ENCODE measurements at regions of chr1 and their contacts with region 1.

Region 1: DNA sequence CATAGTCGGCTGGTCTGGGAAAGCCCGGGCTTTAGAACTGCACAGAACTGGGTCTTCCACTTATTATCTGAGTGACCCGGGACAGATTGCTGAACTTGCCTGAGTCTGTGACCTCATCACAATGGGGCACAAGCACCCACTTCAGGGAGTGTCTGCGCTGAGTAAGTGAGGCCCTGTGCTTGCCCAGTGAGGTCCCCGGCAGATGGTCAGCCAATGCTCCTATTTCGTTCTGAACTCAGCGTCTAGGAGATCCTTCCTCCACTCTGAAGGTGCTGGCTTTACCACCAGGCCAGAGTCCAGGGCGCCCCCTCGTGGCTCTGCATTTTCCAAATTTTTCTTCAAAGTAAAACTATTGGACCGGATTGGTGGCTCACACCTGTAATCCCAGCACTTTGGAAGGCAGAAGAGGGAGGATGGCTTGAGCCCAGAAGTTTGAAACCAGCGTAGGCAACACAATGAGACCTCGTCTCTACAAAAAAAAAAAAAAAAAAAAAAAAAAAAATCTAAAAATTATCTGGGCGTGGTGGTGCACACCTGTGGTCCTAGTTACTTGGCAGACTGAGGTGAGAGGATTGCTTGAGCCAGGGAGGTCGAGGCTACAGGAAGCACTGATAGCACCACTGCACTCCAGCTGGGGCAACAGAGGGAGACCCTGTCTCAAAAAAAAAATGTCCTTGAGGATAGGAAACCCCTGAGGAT is 61.7 kb downstream of the FCRL5 start:
- DNase-seq: peak; percentile 43 to 46
- ATAC-seq: peak in 4 of 8 donors; percentile 24 to 67 (median 32)
- H3K4me3 ChIP-seq: no peak overlapping the region
- H3K27ac ChIP-seq: no peak overlapping the region
- H3K4me1 ChIP-seq: no peaks in the 10 kb centered on the region
- H3K27me3 ChIP-seq: peaks cover 0 to 33% (median 19%) of the 10 kb centered on the region in 7 donors
- CTCF ChIP-seq: peak in 8 of 9 donors; percentile 15 to 59 (median 55)

Region 2: DNA sequence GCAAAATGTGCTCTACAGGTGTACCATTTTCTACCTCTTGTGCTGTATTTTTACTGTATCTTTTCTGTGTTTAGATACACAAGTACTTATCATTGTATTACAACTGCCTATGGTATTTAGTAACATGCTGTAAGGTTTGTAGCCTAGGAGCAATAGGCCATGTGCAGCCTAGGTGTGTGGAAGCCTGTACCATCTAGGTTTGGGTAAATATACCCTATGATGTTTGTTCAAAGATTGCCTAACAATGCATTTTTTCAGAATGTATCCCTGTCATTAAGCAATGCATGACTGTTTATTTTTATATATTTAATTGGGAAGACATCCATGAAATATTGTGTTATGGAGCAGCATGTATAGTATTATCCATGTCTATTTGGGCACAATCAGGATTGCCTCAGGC is 402.0 kb before region 1 on chr1:
- intact Hi-C with region 1: no loop called
- DNase-seq: no peak
- ATAC-seq: no peak
- H3K4me3 ChIP-seq: no peak overlapping the region
- H3K27ac ChIP-seq: no peak overlapping the region
- H3K4me1 ChIP-seq: peaks cover 0 to 19% (median 7%) of the 10 kb centered on the region in 9 donors
- H3K27me3 ChIP-seq: no peaks in the 10 kb centered on the region
- CTCF ChIP-seq: no peak

Region 3: GRCh38 chr1:157099630-157100009 is 391.0 kb before region 1 on chr1 and contains the start of gene ETV3L:
- intact Hi-C with region 1: loop called in 1 of 10 experiments (anchors 5 kb)
- DNase-seq: peak in 1 of 2 donors; percentile 28
- ATAC-seq: peak in 4 of 8 donors; percentile 18 to 44 (median 24)
- H3K4me3 ChIP-seq: no peak within 1 kb of the TSS
- H3K27ac ChIP-seq: no peak within 1 kb of the TSS
- H3K4me1 ChIP-seq: no peaks in the 10 kb centered on the region
- H3K27me3 ChIP-seq: peaks cover 0 to 18% (median 0%) of the 10 kb centered on the region in 7 donors
- CTCF ChIP-seq: no peak
- total RNA-seq, gene ETV3L: not detected

Region 4: DNA sequence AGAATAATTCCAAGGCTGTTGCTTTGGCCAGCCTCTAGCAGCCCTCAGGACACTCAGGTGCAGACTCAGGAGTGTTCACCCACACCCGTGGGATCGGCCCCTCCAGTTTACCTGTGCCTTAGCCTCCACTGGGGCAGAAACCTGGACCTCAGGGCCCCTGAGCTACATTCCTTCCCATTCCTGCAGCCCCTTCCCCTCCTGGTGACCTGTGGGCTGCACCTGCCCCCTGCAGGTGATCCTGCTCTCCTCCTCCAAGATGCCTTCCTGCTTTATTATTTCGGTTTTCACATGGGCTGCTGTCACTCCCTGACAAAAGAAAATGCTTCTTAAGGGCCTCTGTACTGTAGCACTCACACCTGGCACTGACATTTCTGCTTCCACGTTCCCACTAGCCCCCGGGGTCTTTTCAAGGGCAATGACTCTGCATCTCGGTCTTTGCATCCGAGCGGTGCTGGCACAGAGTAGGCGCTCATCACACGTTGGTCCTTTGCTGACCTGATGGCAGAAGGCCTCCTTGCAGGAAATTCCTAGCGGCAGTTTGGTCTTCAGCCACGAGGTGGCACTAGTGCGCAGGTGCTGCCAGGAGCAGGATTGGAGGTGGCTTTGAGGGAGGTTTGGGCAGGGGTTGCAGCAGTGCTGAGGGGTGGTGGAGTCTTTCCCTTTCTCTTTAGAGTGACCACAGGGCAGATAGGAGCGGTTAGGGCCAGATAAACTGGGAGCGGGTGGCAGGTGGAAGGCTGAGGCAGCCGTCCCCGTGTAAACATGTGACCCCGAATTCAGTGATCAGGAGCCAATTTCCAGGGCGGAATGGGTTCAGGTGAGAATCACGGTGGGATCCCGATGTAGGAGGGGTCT is 327.1 kb before region 1 on chr1:
- intact Hi-C with region 1: loop called in 2 of 10 experiments (anchors 5 to 10 kb)
- DNase-seq: peak; percentile 32 to 66
- ATAC-seq: peak in 7 of 8 donors; percentile 37 to 65 (median 49)
- H3K4me3 ChIP-seq: no peak overlapping the region
- H3K27ac ChIP-seq: no peak overlapping the region
- H3K4me1 ChIP-seq: peaks cover 0 to 5% (median 0%) of the 10 kb centered on the region in 9 donors
- H3K27me3 ChIP-seq: peaks cover 0 to 29% (median 12%) of the 10 kb centered on the region in 7 donors
- CTCF ChIP-seq: peak; percentile 69 to 95 (median 87)

Region 5: DNA sequence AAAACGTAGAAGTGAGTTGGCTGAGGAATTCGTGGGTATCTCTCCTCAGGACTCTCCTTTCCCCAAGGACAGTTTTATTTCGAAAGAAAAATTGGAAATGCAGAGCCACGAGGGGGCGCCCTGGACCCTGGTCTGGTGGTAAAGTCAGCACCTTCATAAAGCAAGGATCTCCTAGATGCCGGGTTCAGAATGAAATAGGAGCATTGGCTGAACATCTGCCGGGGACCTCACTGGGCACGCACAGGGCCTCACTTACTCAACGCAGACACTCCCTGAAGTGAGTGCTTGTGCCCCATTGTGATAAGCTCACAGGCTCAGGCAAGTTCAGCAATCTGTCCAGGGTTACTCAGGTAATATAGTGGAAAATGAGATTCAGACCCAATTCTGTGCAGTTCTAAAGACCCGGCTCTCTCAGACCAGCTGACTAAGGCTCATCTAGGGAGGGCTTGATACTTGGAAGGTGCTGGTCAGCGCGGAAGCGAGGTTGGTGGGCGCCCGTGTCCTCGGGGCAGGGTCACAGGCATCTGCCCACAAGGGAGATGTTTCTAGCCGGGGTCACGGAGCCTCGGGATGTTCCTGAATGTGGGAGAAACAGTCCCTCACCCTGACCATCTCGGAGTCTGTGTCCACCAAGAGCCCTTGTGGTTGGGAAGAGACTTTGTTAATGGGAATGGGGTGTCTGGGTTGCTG is 296.8 kb before region 1 on chr1:
- intact Hi-C with region 1: loop called in 8 of 10 experiments (anchors 2 to 5 kb)
- DNase-seq: peak; percentile 17 to 48
- ATAC-seq: no peak
- H3K4me3 ChIP-seq: no peak overlapping the region
- H3K27ac ChIP-seq: no peak overlapping the region
- H3K4me1 ChIP-seq: peaks cover 0 to 6% (median 0%) of the 10 kb centered on the region in 9 donors
- H3K27me3 ChIP-seq: peaks cover 8 to 74% (median 57%) of the 10 kb centered on the region in 7 donors
- CTCF ChIP-seq: peak; percentile 13 to 74 (median 60)

Region 6: DNA sequence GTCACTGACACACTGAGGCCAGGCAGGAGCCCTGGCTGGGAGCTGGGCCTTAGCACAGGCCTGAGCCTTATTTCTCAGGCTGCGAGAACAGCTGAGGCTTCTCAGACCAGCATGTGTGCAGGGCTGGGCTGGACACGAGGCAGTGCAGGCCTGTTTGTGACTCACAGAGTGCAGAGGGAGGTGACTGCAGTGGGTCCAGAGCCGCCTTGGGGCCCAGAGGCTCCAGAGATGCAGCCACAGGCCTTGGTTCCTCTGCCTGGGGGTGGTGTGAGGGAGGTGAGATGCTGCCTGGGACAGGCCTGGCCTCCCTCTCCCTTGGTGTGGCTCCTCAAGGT is 291.2 kb before region 1 on chr1:
- intact Hi-C with region 1: loop called in 8 of 10 experiments (anchors 2 to 5 kb)
- DNase-seq: no peak
- ATAC-seq: no peak
- H3K4me3 ChIP-seq: no peak overlapping the region
- H3K27ac ChIP-seq: no peak overlapping the region
- H3K4me1 ChIP-seq: peaks cover 0 to 5% (median 0%) of the 10 kb centered on the region in 9 donors
- H3K27me3 ChIP-seq: peaks cover 8 to 56% (median 40%) of the 10 kb centered on the region in 7 donors
- CTCF ChIP-seq: no peak

Region 7: GRCh38 chr1:157249326-157249725 is 241.3 kb before region 1 on chr1:
- intact Hi-C with region 1: no loop called
- DNase-seq: no peak
- ATAC-seq: no peak
- H3K4me3 ChIP-seq: no peak overlapping the region
- H3K27ac ChIP-seq: no peak overlapping the region
- H3K4me1 ChIP-seq: no peaks in the 10 kb centered on the region
- H3K27me3 ChIP-seq: peaks cover 0 to 60% (median 8%) of the 10 kb centered on the region in 7 donors
- CTCF ChIP-seq: no peak

Region 8: GRCh38 chr1:157369808-157370521 is 120.7 kb before region 1 on chr1:
- intact Hi-C with region 1: loop called in 8 of 10 experiments (anchors 2 to 10 kb)
- DNase-seq: peak in 1 of 2 donors; percentile 25
- ATAC-seq: peak in 3 of 8 donors; percentile 59 to 71 (median 62)
- H3K4me3 ChIP-seq: no peak overlapping the region
- H3K27ac ChIP-seq: no peak overlapping the region
- H3K4me1 ChIP-seq: no peaks in the 10 kb centered on the region
- H3K27me3 ChIP-seq: peaks cover 0 to 16% (median 8%) of the 10 kb centered on the region in 7 donors
- CTCF ChIP-seq: peak; percentile 81 to 96 (median 94)

Region 9: DNA sequence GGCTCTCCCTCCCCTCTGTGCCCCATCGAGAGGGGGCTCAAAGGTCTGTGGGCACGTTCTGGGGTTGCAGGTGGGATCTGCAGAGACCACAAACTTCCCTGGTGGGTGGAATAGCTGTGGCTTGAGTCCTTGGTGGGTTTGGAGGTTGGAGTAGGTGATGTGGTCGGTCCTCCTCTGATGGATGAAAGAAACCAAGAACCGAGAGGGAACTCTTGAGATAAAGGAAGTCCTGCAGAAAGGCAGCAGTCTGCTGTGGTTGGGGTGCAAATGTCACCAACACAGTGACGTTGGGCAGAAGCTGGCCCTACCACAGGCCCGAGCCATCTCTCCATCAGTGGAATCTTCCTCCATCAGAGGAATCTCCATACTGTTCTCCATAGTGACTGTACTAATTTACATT is 110.1 kb before region 1 on chr1:
- intact Hi-C with region 1: loop called in 6 of 10 experiments (anchors 2 to 10 kb)
- DNase-seq: no peak
- ATAC-seq: no peak
- H3K4me3 ChIP-seq: no peak overlapping the region
- H3K27ac ChIP-seq: no peak overlapping the region
- H3K4me1 ChIP-seq: no peaks in the 10 kb centered on the region
- H3K27me3 ChIP-seq: peaks cover 0 to 69% (median 33%) of the 10 kb centered on the region in 7 donors
- CTCF ChIP-seq: no peak